CD8-positive, alpha-beta T cell (primary cell): ENCODE measurements at regions of chr17 and their contacts with region 1.

Region 1: GRCh38 chr17:77494664-77495435 is 354.1 kb downstream of the SEC14L1 start:
- DNase-seq: peak; percentile 52 to 89 (median 75)
- ATAC-seq: peak; percentile 75
- H3K4me3 ChIP-seq: no peak overlapping the region
- H3K4me3 Mint-ChIP-seq: no peak overlapping the region
- H3K27ac ChIP-seq: peak overlapping the region in 1 of 2 experiments; percentile 28
- H3K27ac Mint-ChIP-seq: peak overlapping the region; percentile 89
- H3K4me1 ChIP-seq: peaks cover 31% of the 10 kb centered on the region
- H3K4me1 Mint-ChIP-seq: peaks cover 25% of the 10 kb centered on the region
- H3K27me3 ChIP-seq: no peaks in the 10 kb centered on the region
- H3K27me3 Mint-ChIP-seq: no peaks in the 10 kb centered on the region
- CTCF ChIP-seq: peak; percentile 99

Region 2: DNA sequence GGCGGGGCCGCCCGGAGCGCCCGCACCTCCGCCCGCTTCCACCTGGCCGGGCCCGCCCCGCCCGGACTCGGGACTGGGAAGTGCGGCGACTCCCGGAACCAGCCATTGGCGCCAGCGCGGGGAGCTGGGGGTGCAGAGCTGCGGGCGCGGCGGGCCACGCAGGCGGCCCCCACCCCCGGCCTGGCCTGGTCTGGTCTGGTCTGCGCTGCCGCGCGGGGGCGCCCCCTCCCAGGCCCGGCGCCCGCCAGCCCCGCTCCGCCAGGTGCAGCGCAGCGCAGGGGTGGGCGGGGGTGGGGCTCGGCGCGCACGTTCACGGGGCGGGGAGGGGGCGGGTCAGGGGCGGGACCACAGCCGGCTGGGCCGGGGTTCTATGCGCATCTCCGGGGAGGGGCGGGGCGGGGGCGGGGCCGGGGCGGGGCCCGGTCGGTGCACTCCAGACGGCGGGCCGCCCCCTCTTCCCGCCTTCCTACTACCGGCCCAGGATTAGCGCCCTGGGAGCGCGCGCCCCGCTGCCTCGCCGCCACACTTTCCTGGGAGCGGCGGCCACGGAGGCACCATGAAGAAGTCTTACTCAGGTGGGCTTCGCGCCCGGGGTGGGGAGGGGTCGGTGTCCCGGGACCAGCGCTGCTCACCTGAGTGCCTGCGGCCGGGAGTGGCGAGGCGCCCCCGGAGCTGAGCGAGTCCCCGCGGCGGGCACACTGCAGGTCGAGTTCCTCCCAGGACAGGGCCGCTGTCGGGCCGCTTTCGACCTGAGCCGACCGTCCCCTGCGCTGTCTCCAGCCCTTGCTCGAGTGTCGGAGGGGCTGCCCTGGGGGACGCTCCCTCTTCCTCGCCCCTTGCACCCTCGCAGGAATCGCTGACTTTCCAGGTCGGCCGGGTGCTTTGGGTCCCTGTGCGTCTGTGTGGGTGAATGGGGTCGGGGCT is 213.6 kb before region 1 on chr17:
- CTCF ChIA-PET with region 1: no interaction called
- POLR2A ChIA-PET with region 1: no interaction called
- intact Hi-C with region 1: loop called (anchors 1 to 2 kb)
- DNase-seq: peak; percentile 24 to 85 (median 63)
- ATAC-seq: peak; percentile 97
- H3K4me3 ChIP-seq: peak overlapping the region; percentile 39 to 68
- H3K4me3 Mint-ChIP-seq: peak overlapping the region; percentile 77
- H3K27ac ChIP-seq: no peak overlapping the region
- H3K27ac Mint-ChIP-seq: peak overlapping the region; percentile 70
- H3K4me1 ChIP-seq: peaks cover 11% of the 10 kb centered on the region
- H3K4me1 Mint-ChIP-seq: peaks cover 6% of the 10 kb centered on the region
- H3K27me3 ChIP-seq: peaks cover 7 to 8% of the 10 kb centered on the region in 2 experiments
- H3K27me3 Mint-ChIP-seq: peaks cover 10% of the 10 kb centered on the region
- CTCF ChIP-seq: no peak

Region 3: DNA sequence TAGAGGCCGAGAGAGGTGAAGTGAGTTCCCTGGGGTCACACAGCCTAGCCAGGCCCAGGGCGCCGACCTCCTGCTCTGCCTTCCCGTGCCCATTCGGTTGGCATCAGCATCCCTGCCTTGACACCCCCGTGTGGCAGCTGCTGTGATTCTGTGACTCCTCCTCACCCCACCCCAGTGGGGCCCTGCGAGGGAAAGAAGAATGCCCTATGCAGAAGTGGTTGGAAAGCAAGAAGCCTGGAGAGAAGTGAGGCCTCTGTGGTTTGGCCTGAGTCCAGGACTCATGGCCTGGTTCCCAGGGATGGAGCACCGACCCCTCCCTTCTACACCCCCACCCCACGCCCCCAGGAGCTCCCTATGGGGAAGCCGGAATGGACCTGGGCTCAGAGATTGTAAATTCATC is 57.8 kb before region 1 on chr17:
- CTCF ChIA-PET with region 1: interaction called, 175 read pairs
- POLR2A ChIA-PET with region 1: interaction called, 3 read pairs
- intact Hi-C with region 1: no loop called
- DNase-seq: peak in 6 of 9 experiments; percentile 42 to 61 (median 56)
- ATAC-seq: no peak
- H3K4me3 ChIP-seq: peak overlapping the region in 1 of 2 experiments; percentile 70
- H3K4me3 Mint-ChIP-seq: peak overlapping the region; percentile 95
- H3K27ac ChIP-seq: peak overlapping the region; percentile 46 to 66
- H3K27ac Mint-ChIP-seq: peak overlapping the region; percentile 97
- H3K4me1 ChIP-seq: peaks cover 83% of the 10 kb centered on the region
- H3K4me1 Mint-ChIP-seq: peaks cover 88% of the 10 kb centered on the region
- H3K27me3 ChIP-seq: no peaks in the 10 kb centered on the region
- H3K27me3 Mint-ChIP-seq: no peaks in the 10 kb centered on the region
- CTCF ChIP-seq: no peak

Region 4: GRCh38 chr17:77451245-77451893 is 43.5 kb before region 1 on chr17:
- CTCF ChIA-PET with region 1: interaction called, 19 read pairs
- POLR2A ChIA-PET with region 1: interaction called, 6 read pairs
- intact Hi-C with region 1: loop called in 1 of 2 experiments (anchors 2 kb)
- DNase-seq: peak; percentile 36 to 86 (median 73)
- ATAC-seq: peak; percentile 25
- H3K4me3 ChIP-seq: peak overlapping the region; percentile 93 to 99
- H3K4me3 Mint-ChIP-seq: peak overlapping the region; percentile 94
- H3K27ac ChIP-seq: peak overlapping the region; percentile 80 to 86
- H3K27ac Mint-ChIP-seq: peak overlapping the region; percentile 100
- H3K4me1 ChIP-seq: peaks cover 54% of the 10 kb centered on the region
- H3K4me1 Mint-ChIP-seq: peaks cover 50% of the 10 kb centered on the region
- H3K27me3 ChIP-seq: no peaks in the 10 kb centered on the region
- H3K27me3 Mint-ChIP-seq: no peaks in the 10 kb centered on the region
- CTCF ChIP-seq: no peak

Region 5: DNA sequence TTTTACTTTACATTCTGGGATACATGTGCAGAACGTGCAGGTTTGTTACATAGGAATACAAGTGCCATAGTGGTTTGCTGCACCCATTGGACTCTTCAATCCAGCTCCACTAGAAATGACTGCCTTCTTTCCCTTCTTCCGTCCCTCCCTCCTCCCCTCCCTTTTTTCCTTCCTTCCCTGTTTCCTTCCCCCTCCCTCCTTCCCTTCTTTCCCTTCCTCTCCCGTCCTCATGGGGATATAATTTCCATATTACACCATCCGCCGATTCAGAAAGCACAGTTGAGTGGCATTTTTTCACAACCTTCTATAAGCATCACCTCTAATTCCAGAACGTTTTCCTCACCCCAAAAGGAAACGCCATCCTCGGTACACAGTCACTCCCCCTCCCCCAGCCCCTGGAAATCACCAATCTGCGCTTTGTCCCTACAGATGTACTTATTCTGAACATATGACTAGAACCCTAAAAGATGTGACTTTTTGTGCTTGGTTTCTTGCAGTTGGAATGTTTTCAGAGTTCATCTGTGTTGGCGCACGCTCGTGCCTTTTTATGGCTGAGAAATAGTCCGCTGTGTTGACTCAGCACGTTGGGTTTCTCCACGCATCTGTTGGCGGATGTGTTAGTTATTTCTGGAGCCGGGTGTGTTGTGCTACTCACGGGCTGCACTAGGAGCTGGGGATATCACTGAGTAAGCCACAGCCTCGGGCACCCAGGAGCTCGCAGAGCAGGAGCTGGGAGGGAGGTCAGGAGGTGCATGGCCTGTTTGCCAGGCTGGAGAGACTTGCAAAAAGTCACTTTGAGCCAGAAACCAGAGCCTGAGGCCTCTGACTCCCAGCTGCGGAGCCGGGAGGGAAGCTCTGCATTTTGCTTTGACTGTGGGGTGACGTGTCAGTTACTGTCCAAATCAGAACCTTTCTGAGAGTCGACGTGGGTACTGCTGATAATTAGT is 17.6 kb before region 1 on chr17:
- CTCF ChIA-PET with region 1: interaction called, 14 read pairs
- POLR2A ChIA-PET with region 1: no interaction called
- intact Hi-C with region 1: no loop called
- DNase-seq: peak in 2 of 9 experiments; percentile 50 to 58
- ATAC-seq: peak; percentile 21
- H3K4me3 ChIP-seq: no peak overlapping the region
- H3K4me3 Mint-ChIP-seq: peak overlapping the region; percentile 54
- H3K27ac ChIP-seq: peak overlapping the region in 1 of 2 experiments; percentile 11
- H3K27ac Mint-ChIP-seq: peak overlapping the region; percentile 99
- H3K4me1 ChIP-seq: peaks cover 98% of the 10 kb centered on the region
- H3K4me1 Mint-ChIP-seq: peaks cover 86% of the 10 kb centered on the region
- H3K27me3 ChIP-seq: no peaks in the 10 kb centered on the region
- H3K27me3 Mint-ChIP-seq: no peaks in the 10 kb centered on the region
- CTCF ChIP-seq: no peak

Region 6: GRCh38 chr17:77723071-77723908 is 228.4 kb after region 1 on chr17:
- CTCF ChIA-PET with region 1: no interaction called
- POLR2A ChIA-PET with region 1: no interaction called
- intact Hi-C with region 1: no loop called
- DNase-seq: peak in 1 of 9 experiments; percentile 45
- ATAC-seq: no peak
- H3K4me3 ChIP-seq: no peak overlapping the region
- H3K4me3 Mint-ChIP-seq: no peak overlapping the region
- H3K27ac ChIP-seq: no peak overlapping the region
- H3K27ac Mint-ChIP-seq: no peak overlapping the region
- H3K4me1 ChIP-seq: no peaks in the 10 kb centered on the region
- H3K4me1 Mint-ChIP-seq: peaks cover 3% of the 10 kb centered on the region
- H3K27me3 ChIP-seq: peaks cover 0 to under 1% of the 10 kb centered on the region in 2 experiments
- H3K27me3 Mint-ChIP-seq: peaks cover 8% of the 10 kb centered on the region
- CTCF ChIP-seq: no peak